ENCODE measurements at regions of chr11 and their contacts with region 1.

Region 1: GRCh38 chr11:124070915-124071635 is 29.9 kb upstream of the OR10G7 start:
- DNase-seq: peak; percentile 82
- ATAC-seq: peak; percentile 62
- H3K4me3 ChIP-seq: peak overlapping the region in 1 of 5 experiments; percentile 23
- H3K4me3 Mint-ChIP-seq: peak overlapping the region; percentile 30
- H3K27ac ChIP-seq: no peak overlapping the region
- H3K27ac Mint-ChIP-seq: no peak overlapping the region
- H3K4me1 ChIP-seq: peaks cover 27 to 33% of the 10 kb centered on the region in 2 donors
- H3K4me1 Mint-ChIP-seq: peaks cover 19% of the 10 kb centered on the region
- H3K27me3 ChIP-seq: peaks cover 0 to 17% (median 7%) of the 10 kb centered on the region in 4 experiments
- H3K27me3 Mint-ChIP-seq: peaks cover 45% of the 10 kb centered on the region
- CTCF ChIP-seq: peak; percentile 91

Region 2: GRCh38 chr11:124194698-124195410 is 123.8 kb after region 1 on chr11:
- CTCF ChIA-PET with region 1: interaction called, 5 read pairs
- POLR2A ChIA-PET with region 1: no interaction called
- intact Hi-C with region 1: loop called (anchors 5 kb)
- DNase-seq: peak; percentile 51
- ATAC-seq: no peak
- H3K4me3 ChIP-seq: no peak overlapping the region
- H3K4me3 Mint-ChIP-seq: no peak overlapping the region
- H3K27ac ChIP-seq: no peak overlapping the region
- H3K27ac Mint-ChIP-seq: no peak overlapping the region
- H3K4me1 ChIP-seq: peaks cover 0 to 3% of the 10 kb centered on the region in 2 donors
- H3K4me1 Mint-ChIP-seq: peaks cover 6% of the 10 kb centered on the region
- H3K27me3 ChIP-seq: no peaks in the 10 kb centered on the region
- H3K27me3 Mint-ChIP-seq: peaks cover 3% of the 10 kb centered on the region
- CTCF ChIP-seq: peak; percentile 55

Region 3: GRCh38 chr11:124329787-124330478 is 258.9 kb after region 1 on chr11:
- CTCF ChIA-PET with region 1: interaction called, 41 read pairs
- POLR2A ChIA-PET with region 1: no interaction called
- intact Hi-C with region 1: loop called (anchors 1 kb)
- DNase-seq: peak; percentile 81
- ATAC-seq: peak; percentile 88
- H3K4me3 ChIP-seq: peak overlapping the region in 1 of 5 experiments; percentile 41
- H3K4me3 Mint-ChIP-seq: peak overlapping the region; percentile 26
- H3K27ac ChIP-seq: peak overlapping the region; percentile 28 to 58
- H3K27ac Mint-ChIP-seq: peak overlapping the region; percentile 62
- H3K4me1 ChIP-seq: peaks cover 46% of the 10 kb centered on the region in 2 donors
- H3K4me1 Mint-ChIP-seq: peaks cover 44% of the 10 kb centered on the region
- H3K27me3 ChIP-seq: no peaks in the 10 kb centered on the region
- H3K27me3 Mint-ChIP-seq: no peaks in the 10 kb centered on the region
- CTCF ChIP-seq: no peak

Region 4: GRCh38 chr11:124402326-124402922 is 331.3 kb after region 1 on chr11:
- CTCF ChIA-PET with region 1: interaction called, 11 read pairs
- POLR2A ChIA-PET with region 1: no interaction called
- intact Hi-C with region 1: no loop called
- DNase-seq: peak; percentile 67
- ATAC-seq: peak; percentile 43
- H3K4me3 ChIP-seq: no peak overlapping the region
- H3K4me3 Mint-ChIP-seq: no peak overlapping the region
- H3K27ac ChIP-seq: no peak overlapping the region
- H3K27ac Mint-ChIP-seq: no peak overlapping the region
- H3K4me1 ChIP-seq: peaks cover 0 to 6% of the 10 kb centered on the region in 2 donors
- H3K4me1 Mint-ChIP-seq: peaks cover 8% of the 10 kb centered on the region
- H3K27me3 ChIP-seq: no peaks in the 10 kb centered on the region
- H3K27me3 Mint-ChIP-seq: peaks cover 4% of the 10 kb centered on the region
- CTCF ChIP-seq: peak; percentile 85

Region 5: DNA sequence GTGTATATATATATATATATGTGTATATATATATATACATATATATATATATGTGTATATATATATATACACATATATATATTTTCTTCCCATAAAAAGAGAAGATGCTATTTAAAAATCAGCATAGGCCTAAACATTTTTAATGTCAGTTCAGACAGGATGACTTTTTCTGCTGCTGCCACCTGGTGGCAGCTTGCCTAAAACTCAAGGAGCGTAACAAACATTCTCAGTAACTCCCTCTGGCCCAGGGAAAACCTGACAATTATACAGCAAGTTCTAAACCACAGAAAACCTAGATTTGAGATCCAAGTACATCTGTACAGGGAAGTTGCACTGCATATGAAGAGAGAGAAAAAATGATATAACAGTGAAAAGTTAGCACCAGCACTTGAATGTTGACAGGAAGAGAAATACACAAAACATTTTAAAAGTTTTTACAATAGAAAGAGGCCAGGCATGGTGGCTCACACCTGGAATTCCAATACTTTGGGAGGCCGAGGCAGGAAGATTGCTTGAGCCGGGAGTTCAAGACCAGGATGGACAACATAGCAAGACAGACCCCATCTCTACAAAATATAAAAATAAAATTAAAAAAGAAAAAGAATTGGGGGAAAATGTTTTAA is 515.3 kb after region 1 on chr11:
- CTCF ChIA-PET with region 1: interaction called, 95 read pairs
- POLR2A ChIA-PET with region 1: no interaction called
- intact Hi-C with region 1: no loop called
- DNase-seq: peak; percentile 68
- ATAC-seq: no peak
- H3K4me3 ChIP-seq: no peak overlapping the region
- H3K4me3 Mint-ChIP-seq: no peak overlapping the region
- H3K27ac ChIP-seq: no peak overlapping the region
- H3K27ac Mint-ChIP-seq: no peak overlapping the region
- H3K4me1 ChIP-seq: no peaks in the 10 kb centered on the region
- H3K4me1 Mint-ChIP-seq: no peaks in the 10 kb centered on the region
- H3K27me3 ChIP-seq: no peaks in the 10 kb centered on the region
- H3K27me3 Mint-ChIP-seq: peaks cover 21% of the 10 kb centered on the region
- CTCF ChIP-seq: peak; percentile 84